ENCODE measurements at regions of chr2 and their contacts with region 1.

Region 1: DNA sequence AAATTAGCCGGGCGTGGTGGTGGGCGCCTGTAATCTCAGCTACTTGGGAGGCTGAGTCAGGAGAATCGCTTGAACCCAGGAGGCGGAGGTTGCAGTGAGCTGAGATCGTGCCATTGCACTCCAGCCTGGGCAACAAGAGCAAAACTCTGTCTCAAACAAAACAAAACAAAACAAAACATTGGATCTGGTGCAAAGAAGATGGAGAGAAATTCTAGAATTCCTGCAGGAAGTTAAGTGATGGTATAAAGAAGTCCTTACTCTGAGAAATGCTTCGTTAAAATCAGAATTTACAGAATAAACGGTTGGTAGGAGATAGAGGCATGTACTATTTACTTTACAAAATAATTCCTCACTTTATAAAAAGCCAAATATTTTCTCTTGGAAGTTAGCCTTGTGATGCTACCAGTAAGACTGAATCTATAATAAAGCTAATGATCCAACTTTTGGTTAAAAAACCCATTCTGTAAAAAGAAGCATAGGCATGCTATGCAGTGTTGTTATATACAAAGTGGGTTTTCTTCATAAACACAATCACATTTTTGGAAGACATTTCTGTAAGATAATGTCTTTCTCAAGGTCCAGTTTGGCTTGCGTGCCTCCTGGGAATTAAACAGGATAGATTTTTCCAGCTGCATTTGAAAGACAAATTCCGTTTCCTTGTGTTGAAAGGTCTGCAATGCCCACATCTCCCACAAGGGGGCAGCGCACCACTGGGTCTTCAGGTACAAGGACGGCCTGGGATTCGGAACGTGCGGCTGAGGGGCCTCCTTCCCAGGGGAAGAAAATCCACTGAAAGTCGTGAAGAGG is 35.6 kb upstream of the PNO1 start:
- DNase-seq: peak; percentile 88
- H3K4me3 ChIP-seq: peak overlapping the region in 1 of 3 experiments; percentile 22
- H3K27ac ChIP-seq: no peak overlapping the region
- H3K4me1 ChIP-seq: peaks cover 3% of the 10 kb centered on the region
- H3K27me3 ChIP-seq: peaks cover 0 to 2% of the 10 kb centered on the region in 2 experiments
- CTCF ChIP-seq: peak; percentile 93 to 97
- POLR2A ChIP-seq: no peak

Region 2: GRCh38 chr2:68157402-68158133 is 35.5 kb after region 1 on chr2 and contains the start of gene PNO1:
- CTCF ChIA-PET with region 1: interaction called, 11 read pairs
- POLR2A ChIA-PET with region 1: no interaction called
- dilution Hi-C with region 1: no loop called
- intact Hi-C with region 1: loop called (anchors 1 kb)
- DNase-seq: peak; percentile 96
- H3K4me3 ChIP-seq: peak within 1 kb of the TSS; percentile 66 to 99 (median 89)
- H3K27ac ChIP-seq: peak within 1 kb of the TSS; percentile 83
- H3K4me1 ChIP-seq: peaks cover 21% of the 10 kb centered on the region
- H3K27me3 ChIP-seq: no peaks in the 10 kb centered on the region
- CTCF ChIP-seq: peak in 1 of 2 donors; percentile 8
- POLR2A ChIP-seq: peak; percentile 47
- total RNA-seq, gene PNO1: 19.9 and 25.6 TPM in 2 replicates

Region 3: DNA sequence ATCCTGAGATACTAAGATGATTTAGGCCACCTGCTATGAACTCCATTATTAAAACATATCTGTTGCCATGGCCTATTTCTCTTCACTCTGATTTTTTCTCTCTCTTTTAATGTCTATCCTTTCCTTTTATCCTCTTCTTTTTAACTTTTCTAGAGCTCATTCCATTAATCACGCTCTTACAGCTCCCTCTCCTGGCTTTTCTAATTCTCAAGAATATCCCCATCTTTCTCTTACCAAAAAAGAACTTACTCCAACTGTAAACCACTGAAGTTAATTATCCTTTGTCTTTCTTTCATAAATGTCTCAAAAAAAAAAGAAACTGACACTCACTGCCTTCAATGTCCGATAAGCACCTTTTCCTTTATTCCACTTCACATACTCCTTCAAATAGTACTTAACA is 122.4 kb after region 1 on chr2:
- CTCF ChIA-PET with region 1: interaction called, 19 read pairs
- POLR2A ChIA-PET with region 1: no interaction called
- dilution Hi-C with region 1: no loop called
- intact Hi-C with region 1: no loop called
- DNase-seq: no peak
- H3K4me3 ChIP-seq: no peak overlapping the region
- H3K27ac ChIP-seq: no peak overlapping the region
- H3K4me1 ChIP-seq: peaks cover 21% of the 10 kb centered on the region
- H3K27me3 ChIP-seq: no peaks in the 10 kb centered on the region
- CTCF ChIP-seq: no peak
- POLR2A ChIP-seq: no peak

Region 4: DNA sequence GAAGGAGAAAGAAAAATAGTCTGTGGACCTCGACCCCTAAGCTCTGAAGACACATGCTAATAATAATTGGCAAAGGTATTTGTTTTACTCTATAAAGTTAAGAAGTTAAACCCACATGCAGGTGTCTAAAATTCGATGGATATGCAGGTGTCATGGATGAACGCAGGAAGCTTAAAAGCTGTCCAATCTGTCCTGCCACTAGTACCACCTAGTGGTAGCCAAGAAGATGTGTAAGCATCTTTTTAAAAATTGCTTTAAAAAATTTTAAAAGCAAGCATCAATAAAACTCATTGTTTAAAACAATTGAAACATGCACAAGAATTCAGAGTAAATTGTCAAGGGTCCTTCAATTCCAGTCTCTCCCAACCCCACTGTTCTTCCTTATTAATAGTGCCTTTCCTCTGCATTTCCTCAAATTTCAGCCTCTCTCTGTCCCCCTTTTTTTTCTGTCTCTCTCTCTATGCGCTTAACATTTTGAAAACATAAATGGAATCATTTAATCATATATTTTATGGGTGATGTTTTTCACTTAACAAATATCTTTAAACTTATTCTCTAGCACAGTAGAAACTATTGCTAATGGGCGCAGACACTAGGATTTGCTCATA is 160.8 kb after region 1 on chr2:
- CTCF ChIA-PET with region 1: interaction called, 153 read pairs
- POLR2A ChIA-PET with region 1: no interaction called
- dilution Hi-C with region 1: no loop called
- intact Hi-C with region 1: loop called (anchors 1 kb)
- DNase-seq: peak; percentile 35
- H3K4me3 ChIP-seq: no peak overlapping the region
- H3K27ac ChIP-seq: no peak overlapping the region
- H3K4me1 ChIP-seq: no peaks in the 10 kb centered on the region
- H3K27me3 ChIP-seq: no peaks in the 10 kb centered on the region
- CTCF ChIP-seq: peak; percentile 43 to 61
- POLR2A ChIP-seq: no peak

Region 5: GRCh38 chr2:68362069-68362468 is 240.0 kb after region 1 on chr2:
- CTCF ChIA-PET with region 1: interaction called, 41 read pairs
- POLR2A ChIA-PET with region 1: no interaction called
- dilution Hi-C with region 1: no loop called
- intact Hi-C with region 1: loop called (anchors 2 kb)
- DNase-seq: peak; percentile 58
- H3K4me3 ChIP-seq: no peak overlapping the region
- H3K27ac ChIP-seq: no peak overlapping the region
- H3K4me1 ChIP-seq: no peaks in the 10 kb centered on the region
- H3K27me3 ChIP-seq: no peaks in the 10 kb centered on the region
- CTCF ChIP-seq: peak; percentile 78 to 84
- POLR2A ChIP-seq: no peak